Activated T-helper 1 cell treated with anti-CD3 and anti-CD28 coated beads, Interleukin-12 subunit alpha, Interleukin-12 subunit beta, Interleukin-2, Interleukin-4 antibody, amounts not matched to agents 30 ng/mL and 10 ng/mL and 1 ng/mL, durations not matched to agents 14 hours and 24 hours and 36 hours (primary cell): ENCODE measurements at regions of chr6 and their contacts with region 1.

Region 1: DNA sequence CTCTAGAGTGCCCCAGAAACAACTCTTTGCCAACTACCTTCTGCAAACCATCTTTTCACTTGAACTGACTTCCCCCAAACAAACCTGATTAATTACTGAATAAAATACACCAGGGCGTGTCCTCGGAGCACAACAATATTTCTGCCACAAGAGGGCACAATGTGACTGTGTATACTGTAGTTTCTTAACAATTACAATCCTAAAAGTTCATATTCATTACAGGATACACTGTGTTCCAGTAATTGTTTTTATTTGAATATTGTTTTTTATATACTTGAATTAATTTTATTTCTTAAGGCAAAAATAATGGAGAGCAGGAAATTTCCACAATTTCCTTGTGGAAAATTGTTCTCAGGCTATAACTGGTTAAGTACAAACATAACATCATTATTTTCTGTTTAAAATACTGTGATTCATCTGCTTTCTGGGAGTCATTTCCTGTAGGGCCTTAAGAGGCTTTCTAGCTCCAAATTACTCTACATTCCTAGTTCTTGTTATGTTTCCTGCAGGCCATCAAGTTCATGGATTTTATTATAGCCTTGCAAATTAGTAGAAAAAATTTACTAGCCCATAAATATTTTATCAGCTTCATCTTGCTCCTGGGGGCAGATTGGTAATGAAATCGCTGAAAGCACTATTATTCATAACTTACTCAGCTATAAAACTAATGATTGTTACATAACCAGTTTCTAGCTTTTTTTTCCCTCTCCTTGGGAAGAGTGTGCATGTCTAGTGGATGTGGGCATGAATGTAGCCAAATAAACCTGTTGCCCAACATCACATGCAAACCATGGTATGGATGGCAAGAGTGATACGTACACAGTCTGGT is 51.9 kb upstream of the SLC22A16 start:
- DNase-seq: peak; percentile 24
- H3K4me3 Mint-ChIP-seq: no peak overlapping the region
- H3K27ac Mint-ChIP-seq: no peak overlapping the region
- H3K4me1 Mint-ChIP-seq: peaks cover 9% of the 10 kb centered on the region
- H3K27me3 Mint-ChIP-seq: peaks cover 8% of the 10 kb centered on the region

Region 2: DNA sequence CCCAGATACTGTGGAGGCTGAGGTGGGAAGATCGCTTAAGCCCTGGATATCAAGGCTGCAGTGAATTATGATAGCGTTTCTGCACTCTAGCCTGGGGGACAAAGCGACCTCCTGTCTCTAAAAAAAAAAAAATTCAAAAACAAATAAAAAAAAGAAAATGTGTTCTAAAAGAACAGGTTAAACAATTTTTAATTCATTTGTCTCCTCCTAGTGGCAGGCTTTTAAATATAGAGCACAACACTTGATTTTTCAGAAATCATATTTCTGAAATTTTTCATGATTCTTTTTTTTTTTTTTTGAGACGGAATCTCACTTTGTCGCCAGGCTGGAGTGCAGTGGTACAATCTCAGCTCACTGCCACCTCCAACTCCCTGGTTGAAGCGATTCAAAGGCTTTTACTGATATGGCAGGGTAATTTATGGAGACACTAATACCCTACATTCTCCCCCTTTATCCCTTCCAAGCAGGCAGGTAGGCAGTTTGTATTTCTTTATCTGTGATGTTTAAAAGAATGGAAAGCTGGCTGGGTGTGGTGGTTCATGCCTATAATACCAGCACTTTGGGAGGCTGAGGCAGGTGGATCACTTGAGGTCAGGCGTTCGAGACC is 421.5 kb after region 1 on chr6:
- intact Hi-C with region 1: loop called (anchors 1 kb)
- DNase-seq: no peak
- H3K4me3 Mint-ChIP-seq: no peak overlapping the region
- H3K27ac Mint-ChIP-seq: no peak overlapping the region
- H3K4me1 Mint-ChIP-seq: peaks cover 8% of the 10 kb centered on the region
- H3K27me3 Mint-ChIP-seq: peaks cover 2% of the 10 kb centered on the region

Region 3: DNA sequence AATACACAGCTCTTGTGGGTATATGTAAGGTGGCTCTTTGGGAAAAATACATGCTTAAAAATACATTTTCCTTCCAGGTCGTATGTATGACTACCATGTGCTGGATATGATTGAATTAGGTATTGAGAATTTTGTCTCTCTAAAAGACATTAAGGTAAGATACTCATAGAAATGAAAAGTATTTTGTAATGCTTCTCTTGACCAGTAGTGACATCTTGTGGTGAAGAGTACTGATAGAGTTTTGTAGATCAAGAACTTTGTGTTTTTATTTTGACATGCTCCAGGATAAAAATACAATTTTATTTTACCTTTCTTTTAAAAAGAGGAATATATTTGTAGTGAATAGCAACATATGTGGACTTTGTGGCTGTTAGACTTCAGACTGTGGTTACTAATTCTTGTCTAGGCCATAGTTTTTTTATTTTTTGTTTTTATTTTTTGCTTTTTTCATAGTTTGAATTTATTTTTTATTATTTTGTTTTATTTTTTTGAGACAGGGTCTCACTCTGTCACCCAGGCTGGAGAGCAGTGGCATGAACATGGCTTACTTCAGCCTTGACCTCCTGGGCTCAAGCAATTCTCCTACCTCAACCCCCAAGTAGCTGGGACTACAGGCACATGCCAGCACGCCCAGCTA is 471.4 kb after region 1 on chr6:
- intact Hi-C with region 1: loop called (anchors 1 kb)
- DNase-seq: no peak
- H3K4me3 Mint-ChIP-seq: no peak overlapping the region
- H3K27ac Mint-ChIP-seq: no peak overlapping the region
- H3K4me1 Mint-ChIP-seq: peaks cover under 1% of the 10 kb centered on the region
- H3K27me3 Mint-ChIP-seq: no peaks in the 10 kb centered on the region